MCF 10A (cell line): ENCODE measurements at regions of chr1 and their contacts with region 1.

Region 1: DNA sequence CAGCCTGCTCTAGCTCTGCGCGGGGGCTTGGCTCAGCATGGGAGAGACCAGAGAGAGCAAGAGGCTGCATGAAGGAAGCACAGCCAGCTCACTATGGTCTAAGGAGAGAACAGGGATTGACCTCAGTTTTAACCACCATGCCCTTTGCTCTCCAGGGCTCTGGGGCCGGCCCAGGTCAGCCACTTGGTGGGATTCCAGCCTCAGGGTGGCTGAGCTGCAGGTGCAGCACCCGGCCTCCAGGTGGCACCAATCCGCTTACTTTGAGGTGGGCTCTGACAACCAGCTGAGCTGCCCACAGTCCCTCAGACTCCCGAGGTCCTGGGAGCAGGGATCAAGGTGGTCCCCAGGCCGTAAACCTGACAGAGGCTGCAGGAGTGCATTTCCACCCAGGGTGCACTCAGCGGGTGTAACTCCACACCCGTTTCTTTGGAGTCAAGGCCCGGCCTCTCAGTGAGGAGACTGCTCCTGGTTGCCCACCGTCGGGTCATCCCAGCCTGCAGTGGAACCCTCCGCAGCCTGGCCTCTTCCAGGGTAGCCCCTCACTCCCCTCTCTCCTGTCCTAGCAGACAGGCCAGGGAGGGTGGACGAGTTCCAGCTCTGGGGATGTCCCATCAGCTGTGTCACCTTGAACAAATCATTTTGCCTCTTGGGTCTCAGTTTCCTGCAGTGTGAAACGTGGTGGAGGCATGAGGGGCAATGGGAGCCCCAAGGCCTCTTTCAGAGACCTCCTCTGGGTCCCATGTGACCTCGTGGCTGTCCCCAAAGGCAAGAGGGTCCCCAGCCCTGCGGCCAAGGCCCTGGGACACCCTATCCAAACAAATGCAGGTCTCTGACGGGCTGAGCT is 607 bp upstream of the LGR6 start:
- DNase-seq: peak; percentile 72
- H3K4me3 Mint-ChIP-seq: no peak overlapping the region
- H3K27ac Mint-ChIP-seq: no peak overlapping the region
- H3K4me1 Mint-ChIP-seq: peaks cover under 1% of the 10 kb centered on the region
- H3K27me3 Mint-ChIP-seq: peaks cover 38% of the 10 kb centered on the region
- CTCF ChIP-seq: peak; percentile 99

Region 2: GRCh38 chr1:201970334-201971159 is 222.4 kb before region 1 on chr1:
- CTCF ChIA-PET with region 1: no interaction called
- POLR2A ChIA-PET with region 1: no interaction called
- intact Hi-C with region 1: no loop called
- DNase-seq: no peak
- H3K4me3 Mint-ChIP-seq: no peak overlapping the region
- H3K27ac Mint-ChIP-seq: no peak overlapping the region
- H3K4me1 Mint-ChIP-seq: peaks cover 15% of the 10 kb centered on the region
- H3K27me3 Mint-ChIP-seq: peaks cover 8% of the 10 kb centered on the region
- CTCF ChIP-seq: no peak

Region 3: DNA sequence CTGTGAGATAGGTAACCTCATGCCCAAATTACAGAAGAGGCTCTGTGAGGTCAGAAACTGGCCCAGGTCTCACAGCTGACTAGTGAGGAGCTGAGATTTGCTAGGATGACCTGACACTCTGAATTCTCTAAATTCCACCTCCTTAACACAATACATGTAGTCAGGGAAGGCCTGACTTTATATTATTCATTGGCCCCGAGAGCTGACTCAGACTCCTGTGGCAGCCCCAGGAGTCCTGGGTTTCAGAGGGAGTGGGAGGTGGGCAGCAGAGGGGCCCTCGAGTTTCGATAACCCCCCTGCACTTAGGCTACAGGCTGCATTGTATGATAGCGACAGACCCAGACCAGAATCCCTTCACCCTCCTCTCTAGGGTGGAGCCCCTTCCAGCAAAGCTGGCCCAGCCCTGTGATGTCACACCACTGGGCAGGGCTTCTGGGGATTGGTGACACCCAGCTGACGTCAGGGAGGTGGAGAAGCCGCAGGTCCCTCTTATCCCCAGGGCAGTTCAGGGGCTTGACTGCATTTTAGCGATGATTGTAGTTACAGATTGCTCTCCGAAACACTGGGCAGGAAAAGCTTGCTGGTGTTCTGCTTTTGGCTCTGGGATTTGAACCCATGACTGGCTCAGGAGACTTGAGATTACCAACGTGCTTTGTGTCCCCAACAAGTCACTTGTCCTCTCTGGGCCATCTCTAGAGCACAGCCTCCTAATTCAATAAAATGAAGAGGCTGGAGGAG is 87.3 kb before region 1 on chr1:
- CTCF ChIA-PET with region 1: no interaction called
- POLR2A ChIA-PET with region 1: no interaction called
- intact Hi-C with region 1: no loop called
- DNase-seq: peak; percentile 76
- H3K4me3 Mint-ChIP-seq: no peak overlapping the region
- H3K27ac Mint-ChIP-seq: peak overlapping the region; percentile 2
- H3K4me1 Mint-ChIP-seq: peaks cover 40% of the 10 kb centered on the region
- H3K27me3 Mint-ChIP-seq: no peaks in the 10 kb centered on the region
- CTCF ChIP-seq: no peak

Region 4: GRCh38 chr1:202144402-202145067 is 48.5 kb before region 1 on chr1 and contains the start of gene ARL8A:
- CTCF ChIA-PET with region 1: interaction called, 17 read pairs
- POLR2A ChIA-PET with region 1: no interaction called
- intact Hi-C with region 1: no loop called
- DNase-seq: peak; percentile 72
- H3K4me3 Mint-ChIP-seq: peak within 1 kb of the TSS; percentile 86
- H3K27ac Mint-ChIP-seq: peak within 1 kb of the TSS; percentile 86
- H3K4me1 Mint-ChIP-seq: peaks cover 12% of the 10 kb centered on the region
- H3K27me3 Mint-ChIP-seq: no peaks in the 10 kb centered on the region
- CTCF ChIP-seq: no peak
- total RNA-seq, gene ARL8A: 94.8 and 126 TPM in 2 replicates

Region 5: GRCh38 chr1:202207292-202207691 is 14.3 kb after region 1 on chr1:
- CTCF ChIA-PET with region 1: interaction called, 17 read pairs
- POLR2A ChIA-PET with region 1: interaction called, 3 read pairs
- intact Hi-C with region 1: no loop called
- DNase-seq: peak; percentile 69
- H3K4me3 Mint-ChIP-seq: no peak overlapping the region
- H3K27ac Mint-ChIP-seq: no peak overlapping the region
- H3K4me1 Mint-ChIP-seq: peaks cover 5% of the 10 kb centered on the region
- H3K27me3 Mint-ChIP-seq: peaks cover 8% of the 10 kb centered on the region
- CTCF ChIP-seq: peak; percentile 13

Region 6: DNA sequence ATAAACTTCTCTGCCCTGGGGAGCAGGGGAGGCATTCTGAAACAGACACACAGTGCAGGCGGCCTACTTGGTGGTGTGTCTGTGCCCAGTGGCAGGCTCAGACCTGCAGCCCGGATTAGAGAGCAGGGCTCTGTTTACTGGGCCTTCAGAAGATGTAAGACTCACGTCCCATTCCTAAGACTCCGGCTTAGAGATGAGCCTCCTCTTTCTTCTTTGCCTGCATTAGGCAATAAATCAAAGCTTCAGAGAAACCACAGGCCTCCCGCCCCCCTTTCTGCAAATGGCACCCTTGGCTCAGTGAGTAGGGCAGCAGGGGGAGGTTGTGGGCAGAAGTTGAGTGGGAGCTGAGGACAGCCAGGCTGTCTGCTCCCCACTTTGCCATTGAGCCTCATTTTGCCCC is 36.4 kb after region 1 on chr1:
- CTCF ChIA-PET with region 1: interaction called, 23 read pairs
- POLR2A ChIA-PET with region 1: no interaction called
- intact Hi-C with region 1: no loop called
- DNase-seq: no peak
- H3K4me3 Mint-ChIP-seq: no peak overlapping the region
- H3K27ac Mint-ChIP-seq: no peak overlapping the region
- H3K4me1 Mint-ChIP-seq: peaks cover 15% of the 10 kb centered on the region
- H3K27me3 Mint-ChIP-seq: no peaks in the 10 kb centered on the region
- CTCF ChIP-seq: no peak

Region 7: GRCh38 chr1:202274611-202275010 is 81.6 kb after region 1 on chr1:
- CTCF ChIA-PET with region 1: interaction called, 20 read pairs
- POLR2A ChIA-PET with region 1: no interaction called
- intact Hi-C with region 1: loop called (anchors 2 kb)
- DNase-seq: peak; percentile 92
- H3K4me3 Mint-ChIP-seq: no peak overlapping the region
- H3K27ac Mint-ChIP-seq: no peak overlapping the region
- H3K4me1 Mint-ChIP-seq: peaks cover 3% of the 10 kb centered on the region
- H3K27me3 Mint-ChIP-seq: no peaks in the 10 kb centered on the region
- CTCF ChIP-seq: peak; percentile 88

Region 8: GRCh38 chr1:202310071-202310722 is 117.2 kb after region 1 on chr1:
- CTCF ChIA-PET with region 1: interaction called, 954 read pairs
- POLR2A ChIA-PET with region 1: interaction called, 11 read pairs
- intact Hi-C with region 1: loop called (anchors 1 kb)
- DNase-seq: no peak
- H3K4me3 Mint-ChIP-seq: no peak overlapping the region
- H3K27ac Mint-ChIP-seq: no peak overlapping the region
- H3K4me1 Mint-ChIP-seq: no peaks in the 10 kb centered on the region
- H3K27me3 Mint-ChIP-seq: no peaks in the 10 kb centered on the region
- CTCF ChIP-seq: no peak

Region 9: GRCh38 chr1:202716654-202717053 is 523.7 kb after region 1 on chr1:
- CTCF ChIA-PET with region 1: interaction called, 14 read pairs
- POLR2A ChIA-PET with region 1: no interaction called
- intact Hi-C with region 1: no loop called
- DNase-seq: no peak
- H3K4me3 Mint-ChIP-seq: no peak overlapping the region
- H3K27ac Mint-ChIP-seq: no peak overlapping the region
- H3K4me1 Mint-ChIP-seq: no peaks in the 10 kb centered on the region
- H3K27me3 Mint-ChIP-seq: peaks cover 40% of the 10 kb centered on the region
- CTCF ChIP-seq: no peak